Esophagus squamous epithelium (tissue), 5 donors: ENCODE measurements at regions of chr9 and their contacts with region 1.

Region 1: GRCh38 chr9:116572095-116572748 is 114.9 kb upstream of the TRIM32 start:
- DNase-seq: no peak
- H3K4me3 ChIP-seq: no peak overlapping the region
- H3K27ac ChIP-seq: no peak overlapping the region
- H3K4me1 ChIP-seq: peaks cover 13 to 81% (median 15%) of the 10 kb centered on the region in 3 donors
- H3K27me3 ChIP-seq: no peaks in the 10 kb centered on the region
- CTCF ChIP-seq: peak; percentile 39 to 94 (median 80)
- POLR2A ChIP-seq: no peak

Region 2: GRCh38 chr9:115883457-115884329 is 688.5 kb before region 1 on chr9:
- intact Hi-C with region 1: loop called (anchors 10 kb)
- DNase-seq: no peak
- H3K4me3 ChIP-seq: no peak overlapping the region
- H3K27ac ChIP-seq: no peak overlapping the region
- H3K4me1 ChIP-seq: peaks cover 0 to 46% (median 13%) of the 10 kb centered on the region in 3 donors
- H3K27me3 ChIP-seq: no peaks in the 10 kb centered on the region
- CTCF ChIP-seq: peak in 5 of 6 experiments; percentile 40 to 80 (median 51)
- POLR2A ChIP-seq: no peak

Region 3: GRCh38 chr9:116149844-116150243 is 422.4 kb before region 1 on chr9:
- intact Hi-C with region 1: loop called (anchors 10 kb)
- DNase-seq: no peak
- H3K4me3 ChIP-seq: no peak overlapping the region
- H3K27ac ChIP-seq: no peak overlapping the region
- H3K4me1 ChIP-seq: peaks cover 0 to 30% (median 0%) of the 10 kb centered on the region in 3 donors
- H3K27me3 ChIP-seq: peaks cover 0 to 53% (median 0%) of the 10 kb centered on the region in 4 donors
- CTCF ChIP-seq: peak in 5 of 6 experiments; percentile 36 to 73 (median 54)
- POLR2A ChIP-seq: no peak

Region 4: GRCh38 chr9:116812231-116813030 is 240.2 kb after region 1 on chr9:
- intact Hi-C with region 1: no loop called
- DNase-seq: no peak
- H3K4me3 ChIP-seq: no peak overlapping the region
- H3K27ac ChIP-seq: no peak overlapping the region
- H3K4me1 ChIP-seq: no peaks in the 10 kb centered on the region
- H3K27me3 ChIP-seq: no peaks in the 10 kb centered on the region
- CTCF ChIP-seq: no peak
- POLR2A ChIP-seq: no peak